Left ventricle myocardium superior (tissue), 1 donor: ENCODE measurements at regions of chr3 and their contacts with region 1.

Region 1: DNA sequence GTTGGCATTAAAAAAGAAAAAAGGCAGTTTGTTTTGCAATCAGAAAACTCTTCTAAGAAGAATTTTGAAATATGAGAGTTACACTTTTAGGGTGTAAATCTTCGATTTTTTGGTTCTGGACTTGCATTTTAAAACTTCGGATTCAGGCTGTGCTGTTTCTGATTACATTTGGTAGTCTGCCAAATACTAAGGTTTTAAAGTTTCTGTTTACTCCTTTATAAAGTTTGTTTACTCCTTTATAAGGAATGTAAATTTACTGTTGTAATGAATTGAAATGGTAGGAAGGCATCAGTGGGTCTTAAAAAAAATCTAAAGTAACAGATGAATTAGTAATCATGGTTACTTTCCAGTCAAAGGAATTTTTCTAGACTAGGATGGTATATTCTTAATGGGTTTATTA is 14.1 kb downstream of the FXR1 start:
- DNase-seq: no peak
- ATAC-seq: no peak

Region 2: GRCh38 chr3:180789774-180790173 is 136.8 kb before region 1 on chr3:
- intact Hi-C with region 1: no loop called
- DNase-seq: no peak
- ATAC-seq: no peak

Region 3: DNA sequence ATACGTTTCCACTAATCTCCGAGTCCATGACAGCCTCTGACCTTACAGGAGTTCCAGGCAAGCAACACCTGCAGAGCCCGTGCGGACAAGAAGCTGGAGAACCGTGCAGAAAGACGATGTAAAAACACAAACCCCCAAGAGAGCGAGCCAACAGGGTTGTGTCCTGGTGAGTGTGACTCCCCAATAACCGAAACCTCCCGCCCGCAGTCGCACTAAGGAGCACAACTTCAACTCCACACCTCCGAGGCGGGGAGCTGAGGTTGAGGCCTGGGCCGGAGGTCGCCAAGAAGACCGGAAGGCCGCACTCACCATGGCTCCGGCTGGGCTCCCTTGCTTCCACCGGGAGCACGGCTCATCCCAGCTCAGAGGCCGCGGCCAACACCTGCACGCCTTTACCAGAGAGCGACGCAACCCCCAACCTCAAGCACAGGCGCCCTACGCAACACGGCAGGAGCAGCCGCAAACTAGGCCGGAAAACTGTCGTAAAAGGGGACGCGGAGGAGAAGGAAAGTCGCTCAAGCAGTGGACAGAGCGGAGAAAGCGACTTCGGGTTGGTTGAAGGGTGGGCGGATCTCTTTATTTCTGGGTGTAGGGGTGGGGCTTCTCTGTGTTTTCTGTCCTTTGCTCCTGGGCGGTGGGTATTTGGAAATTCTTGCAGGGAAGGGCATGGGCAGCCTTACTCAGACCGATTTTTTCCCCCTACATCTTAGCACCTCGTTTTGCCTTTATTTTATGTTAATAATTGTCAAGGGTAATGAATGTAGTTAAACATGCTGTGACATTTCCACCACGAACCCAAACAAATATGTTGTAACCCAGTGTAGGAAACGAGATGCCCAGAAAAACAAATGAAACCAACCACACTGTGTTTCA is 63.0 kb after region 1 on chr3 and contains the start of gene DNAJC19:
- intact Hi-C with region 1: loop called (anchors 10 kb)
- DNase-seq: peak; percentile 90
- ATAC-seq: peak; percentile 99
- total RNA-seq, gene DNAJC19: 129 TPM